Activated B cell treated with CpG ODN at 0.5 μM for 24 hours (primary cell): ENCODE measurements at regions of chr19 and their contacts with region 1.

Region 1: DNA sequence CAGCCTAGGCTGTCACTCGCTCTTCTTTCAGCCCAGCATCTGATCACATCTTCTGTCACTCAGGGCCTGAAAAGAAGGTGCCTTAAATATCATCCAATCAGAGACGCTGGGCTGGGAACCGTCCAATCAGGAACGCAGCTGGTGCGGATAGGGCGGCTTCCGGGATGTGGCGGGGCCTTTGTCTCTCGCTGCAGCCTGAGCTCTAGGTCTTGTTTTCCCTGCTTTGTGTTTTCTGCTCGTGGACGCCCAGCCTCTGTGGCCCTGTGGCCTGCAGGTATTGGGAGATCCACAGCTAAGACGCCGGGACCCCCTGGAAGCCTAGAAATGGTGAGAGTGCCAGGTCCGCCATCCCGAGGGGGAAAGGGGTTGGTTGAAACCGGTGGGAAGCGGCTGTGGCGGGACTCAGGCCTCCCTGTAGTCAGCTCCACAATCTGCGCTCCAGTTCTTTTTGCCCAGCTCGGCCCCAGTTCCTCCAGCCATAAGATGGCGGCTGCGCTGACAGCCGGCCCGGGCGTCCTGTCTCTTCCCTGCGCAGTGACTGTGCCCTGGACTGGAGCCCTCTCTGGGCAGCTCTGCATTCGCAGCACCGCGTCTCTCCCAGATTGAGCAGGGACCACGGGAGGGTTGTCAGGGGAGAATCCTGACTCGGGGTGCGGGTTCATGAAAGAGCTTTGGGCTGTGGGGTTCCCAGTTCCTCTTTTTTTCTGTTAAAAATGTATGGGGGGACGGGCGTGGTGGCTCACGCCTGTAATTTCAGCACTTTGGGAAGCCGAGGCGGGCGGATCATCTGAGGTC is at the start of gene ZNF85:
- DNase-seq: peak; percentile 76
- ATAC-seq: peak; percentile 97
- H3K4me3 Mint-ChIP-seq: peak within 1 kb of the TSS; percentile 98
- H3K27ac Mint-ChIP-seq: peak within 1 kb of the TSS; percentile 96
- H3K4me1 Mint-ChIP-seq: peaks cover 13% of the 10 kb centered on the region
- H3K27me3 Mint-ChIP-seq: no peaks in the 10 kb centered on the region
- CTCF ChIP-seq: no peak
- total RNA-seq, gene ZNF85: 15.0 and 18.1 TPM in 2 replicates

Region 2: GRCh38 chr19:20565321-20566018 is 357.8 kb before region 1 on chr19 and contains the start of gene ZNF737:
- CTCF ChIA-PET with region 1: no interaction called
- POLR2A ChIA-PET with region 1: interaction called, 13 read pairs
- intact Hi-C with region 1: loop called (anchors 1 kb)
- DNase-seq: peak; percentile 72
- ATAC-seq: peak; percentile 90
- H3K4me3 Mint-ChIP-seq: peak within 1 kb of the TSS; percentile 99
- H3K27ac Mint-ChIP-seq: peak within 1 kb of the TSS; percentile 99
- H3K4me1 Mint-ChIP-seq: peaks cover 32% of the 10 kb centered on the region
- H3K27me3 Mint-ChIP-seq: no peaks in the 10 kb centered on the region
- CTCF ChIP-seq: no peak
- total RNA-seq, gene ZNF737: 42.7 and 50.9 TPM in 2 replicates

Region 3: DNA sequence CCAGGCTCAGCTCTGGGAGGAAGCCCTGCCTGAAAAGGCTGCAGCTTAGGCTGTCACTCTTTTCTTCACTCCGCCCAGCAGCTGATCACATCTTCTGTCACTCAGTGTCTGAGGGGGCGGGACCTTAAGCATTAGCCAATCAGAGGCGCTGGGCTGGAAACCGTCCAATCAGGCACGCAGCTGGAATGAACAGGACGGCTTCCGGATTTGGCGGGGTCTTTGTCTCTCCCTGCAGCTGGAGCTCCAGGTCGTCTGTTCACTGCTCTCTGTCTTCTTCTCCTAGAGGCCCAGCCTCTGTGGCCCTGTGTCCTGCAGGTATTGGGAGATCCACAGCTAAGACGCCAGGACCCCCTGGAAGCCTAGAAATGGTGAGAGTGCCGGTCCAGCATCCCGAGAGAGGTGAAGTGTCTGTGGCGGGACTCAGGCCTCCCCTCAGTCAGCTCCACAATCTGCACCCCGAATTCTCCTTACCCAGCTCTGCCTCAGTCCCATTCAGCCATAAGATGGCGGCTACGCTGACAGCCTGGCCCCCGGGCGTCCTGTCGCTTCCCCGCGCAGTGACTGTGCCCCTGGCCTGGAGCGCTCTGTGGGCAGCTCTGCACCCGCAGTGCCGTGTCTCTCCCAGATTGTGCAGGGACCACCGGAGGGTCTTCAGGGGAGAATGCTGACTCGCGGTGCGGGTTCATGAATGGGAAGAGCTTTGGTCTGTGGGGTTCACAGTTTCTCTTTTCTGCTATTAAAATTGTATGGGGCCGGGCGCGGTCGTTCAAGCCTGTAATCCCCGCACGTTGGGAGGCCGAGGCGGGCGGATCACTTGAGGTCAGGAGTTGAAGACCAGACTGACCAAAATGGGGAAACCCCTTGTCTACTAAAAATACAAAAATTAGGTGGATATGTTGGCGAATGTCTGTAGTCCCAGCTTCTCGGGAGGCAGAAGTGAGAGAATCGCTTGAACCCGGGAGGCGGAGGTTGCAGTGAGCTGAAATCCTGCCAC is 146.9 kb before region 1 on chr19 and contains the start of gene ZNF66:
- CTCF ChIA-PET with region 1: no interaction called
- POLR2A ChIA-PET with region 1: interaction called, 12 read pairs
- intact Hi-C with region 1: loop called (anchors 10 kb)
- DNase-seq: peak; percentile 85
- ATAC-seq: peak; percentile 98
- H3K4me3 Mint-ChIP-seq: peak within 1 kb of the TSS; percentile 98
- H3K27ac Mint-ChIP-seq: peak within 1 kb of the TSS; percentile 91
- H3K4me1 Mint-ChIP-seq: peaks cover 10% of the 10 kb centered on the region
- H3K27me3 Mint-ChIP-seq: no peaks in the 10 kb centered on the region
- CTCF ChIP-seq: no peak
- total RNA-seq, gene ZNF66: 17.5 and 19.1 TPM in 2 replicates

Region 4: DNA sequence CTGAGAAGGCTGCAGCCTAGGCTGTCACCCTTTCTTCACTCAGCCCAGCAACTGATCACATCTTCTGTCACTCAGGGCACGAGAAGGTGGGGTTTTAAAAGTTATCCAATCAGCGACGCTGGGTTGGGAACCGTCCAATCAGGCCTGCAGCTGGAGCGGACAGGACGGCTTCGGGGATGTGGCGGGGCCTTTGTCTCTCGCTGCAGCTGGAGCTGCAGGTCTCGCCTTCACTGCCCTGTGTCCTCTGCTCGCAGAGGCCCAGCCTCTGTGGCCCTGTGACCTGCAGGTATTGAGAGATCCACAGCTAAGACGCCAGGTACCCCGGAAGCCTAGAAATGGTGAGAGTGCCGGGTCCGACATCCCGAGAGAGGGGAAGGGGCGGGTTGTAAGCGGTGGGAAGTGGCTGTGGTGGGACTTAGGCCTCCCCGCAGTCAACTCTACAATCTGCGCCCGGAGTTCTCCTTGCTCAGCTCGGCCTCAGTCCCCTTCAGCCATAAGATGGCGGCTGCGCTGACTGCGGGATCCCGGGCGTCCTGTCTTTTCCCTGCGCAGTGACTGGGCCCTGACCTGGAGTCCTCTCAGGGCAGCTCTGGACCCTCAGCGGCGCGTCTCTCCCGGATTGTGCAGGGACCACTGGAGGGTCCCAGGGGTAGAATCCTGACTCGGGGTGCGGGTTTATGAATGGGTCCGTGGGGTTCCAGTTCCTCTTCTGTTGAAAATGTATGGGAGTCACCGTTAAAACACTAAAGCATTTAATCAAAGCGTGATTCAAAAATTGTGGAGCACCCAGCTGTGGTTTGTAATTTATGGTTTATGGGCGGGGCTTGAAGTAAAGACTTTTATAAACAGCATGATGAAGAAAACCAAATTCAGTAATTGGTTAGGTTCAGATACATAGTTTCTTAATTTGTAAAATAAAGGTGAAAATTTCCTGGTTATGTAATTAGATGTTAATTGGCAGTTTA is 159.0 kb after region 1 on chr19 and contains the start of gene ZNF714:
- CTCF ChIA-PET with region 1: no interaction called
- POLR2A ChIA-PET with region 1: interaction called, 3 read pairs
- intact Hi-C with region 1: loop called (anchors 5 kb)
- DNase-seq: peak; percentile 63
- ATAC-seq: peak; percentile 100
- H3K4me3 Mint-ChIP-seq: peak within 1 kb of the TSS; percentile 100
- H3K27ac Mint-ChIP-seq: peak within 1 kb of the TSS; percentile 93
- H3K4me1 Mint-ChIP-seq: peaks cover 13% of the 10 kb centered on the region
- H3K27me3 Mint-ChIP-seq: no peaks in the 10 kb centered on the region
- CTCF ChIP-seq: no peak
- total RNA-seq, gene ZNF714: 11.1 and 12.5 TPM in 2 replicates

Region 5: GRCh38 chr19:21396893-21397572 is 473.8 kb after region 1 on chr19 and contains the start of gene ZNF493:
- CTCF ChIA-PET with region 1: no interaction called
- POLR2A ChIA-PET with region 1: no interaction called
- intact Hi-C with region 1: loop called (anchors 2 kb)
- DNase-seq: peak; percentile 75
- ATAC-seq: peak; percentile 100
- H3K4me3 Mint-ChIP-seq: peak within 1 kb of the TSS; percentile 99
- H3K27ac Mint-ChIP-seq: peak within 1 kb of the TSS; percentile 91
- H3K4me1 Mint-ChIP-seq: peaks cover 29% of the 10 kb centered on the region
- H3K27me3 Mint-ChIP-seq: no peaks in the 10 kb centered on the region
- CTCF ChIP-seq: no peak
- total RNA-seq, gene ZNF493: 45.0 and 52.7 TPM in 2 replicates